ENCODE measurements at regions of chr11 and their contacts with region 1.

Region 1: DNA sequence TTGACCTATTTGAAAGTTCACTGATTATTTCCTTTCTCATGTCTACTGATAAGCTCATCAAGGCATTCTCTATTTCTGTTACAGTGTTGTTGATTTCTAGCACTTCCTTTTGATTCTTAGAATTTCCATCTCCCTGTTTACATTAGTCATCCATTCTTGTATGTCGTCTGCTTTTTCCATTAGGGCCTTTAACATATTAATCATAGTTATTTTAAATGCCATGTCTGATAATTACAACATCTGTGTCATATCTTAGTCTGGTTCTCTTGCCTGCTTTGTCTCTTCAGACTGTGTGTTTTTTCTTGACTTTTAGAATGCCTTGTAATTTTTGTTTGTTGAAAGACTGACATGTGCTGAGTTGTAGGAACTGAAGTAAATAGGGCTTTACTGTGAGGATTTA is 602.1 kb downstream of the SOX6 start:
- DNase-seq: no peak
- H3K4me3 Mint-ChIP-seq: no peak overlapping the region
- H3K27ac Mint-ChIP-seq: peak overlapping the region; percentile 64
- H3K4me1 Mint-ChIP-seq: peaks cover 7% of the 10 kb centered on the region
- H3K27me3 Mint-ChIP-seq: no peaks in the 10 kb centered on the region

Region 2: GRCh38 chr11:15810525-15810924 is 56.3 kb after region 1 on chr11:
- intact Hi-C with region 1: loop called (anchors 2 kb)
- DNase-seq: no peak
- H3K4me3 Mint-ChIP-seq: no peak overlapping the region
- H3K27ac Mint-ChIP-seq: peak overlapping the region; percentile 44
- H3K4me1 Mint-ChIP-seq: peaks cover 22% of the 10 kb centered on the region
- H3K27me3 Mint-ChIP-seq: no peaks in the 10 kb centered on the region

Measured in activated T-helper 2 cell treated with anti-CD3 and anti-CD28 coated beads, Interferon-gamma antibody, Interleukin-2, Interleukin-4, amounts not matched to agents 10 μg/mL and 5 μg/mL and 100 μg/mL, durations not matched to agents 14 hours and 24 hours and 36 hours (primary cell).